Natural killer cell (primary cell): ENCODE measurements at regions of chr10 and their contacts with region 1.

Region 1: DNA sequence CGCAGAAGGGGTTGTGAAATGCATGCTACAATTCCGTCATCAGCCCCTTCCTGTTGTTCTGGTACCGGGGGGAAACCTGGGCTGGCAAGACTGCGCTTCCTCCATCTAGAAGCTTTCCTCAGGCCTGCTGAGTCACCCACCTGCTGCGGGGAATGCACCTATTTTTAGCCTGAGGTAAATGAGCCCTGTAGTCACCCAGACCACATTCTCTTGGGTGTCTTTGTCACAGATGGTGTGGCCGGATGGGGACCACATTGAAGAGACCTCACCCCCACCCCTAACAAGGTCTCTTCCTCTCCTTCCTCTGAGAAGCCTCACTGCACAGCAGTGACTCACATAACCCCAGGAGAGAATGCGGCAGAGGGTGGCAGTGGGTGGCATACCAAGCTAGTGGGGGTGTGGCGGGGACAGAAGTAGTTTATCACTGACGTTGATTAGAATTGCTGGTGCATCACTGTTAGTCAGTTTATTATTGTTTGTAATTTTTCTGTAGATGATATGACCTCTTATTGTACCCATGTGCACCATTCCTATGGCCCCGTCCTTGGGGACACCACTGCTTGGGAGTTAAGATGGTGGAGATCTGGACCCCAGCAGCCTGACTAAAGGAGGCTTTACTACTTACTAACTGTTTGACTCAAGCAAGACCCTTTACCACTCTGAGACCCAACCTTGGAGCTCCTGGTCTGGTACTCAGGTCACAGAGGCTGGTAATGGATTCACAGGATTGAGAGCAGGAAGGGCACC is 83.0 kb upstream of the DUSP5 start:
- DNase-seq: peak; percentile 86 to 95
- ATAC-seq: peak; percentile 89 to 96 (median 94)
- H3K4me3 ChIP-seq: no peak overlapping the region
- H3K4me3 Mint-ChIP-seq: peak overlapping the region; percentile 70
- H3K27ac ChIP-seq: peak overlapping the region; percentile 52
- H3K27ac Mint-ChIP-seq: peak overlapping the region; percentile 88 to 89
- H3K4me1 ChIP-seq: peaks cover 62% of the 10 kb centered on the region
- H3K4me1 Mint-ChIP-seq: peaks cover 54 to 63% of the 10 kb centered on the region in 2 donors
- H3K27me3 ChIP-seq: no peaks in the 10 kb centered on the region
- H3K27me3 Mint-ChIP-seq: peaks cover 0 to 10% of the 10 kb centered on the region in 2 donors
- CTCF ChIP-seq: no peak

Region 2: DNA sequence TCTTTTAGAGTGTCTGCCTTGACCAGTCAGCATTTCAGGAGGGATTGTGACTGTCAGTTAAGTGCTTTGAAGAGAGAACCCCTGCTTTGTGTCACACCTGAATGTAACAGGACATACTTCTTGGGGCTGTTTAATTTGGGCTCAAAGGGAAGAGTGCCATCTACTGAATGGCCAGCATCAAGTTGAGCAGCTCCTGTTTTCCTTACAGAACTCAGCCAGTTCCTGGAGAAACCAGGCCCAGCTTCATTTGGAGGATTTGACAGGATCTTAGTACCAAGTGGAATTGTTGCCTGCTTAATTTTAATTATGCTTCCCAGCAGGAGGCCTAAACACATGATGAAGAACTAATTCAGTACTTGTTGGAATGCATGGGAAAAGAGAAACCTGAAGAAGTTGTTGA is 398.7 kb before region 1 on chr10:
- intact Hi-C with region 1: loop called (anchors 10 kb)
- DNase-seq: peak in 1 of 2 donors; percentile 52
- ATAC-seq: no peak
- H3K4me3 ChIP-seq: no peak overlapping the region
- H3K4me3 Mint-ChIP-seq: peak overlapping the region; percentile 6
- H3K27ac ChIP-seq: no peak overlapping the region
- H3K27ac Mint-ChIP-seq: peak overlapping the region; percentile 84 to 86
- H3K4me1 ChIP-seq: peaks cover 26% of the 10 kb centered on the region
- H3K4me1 Mint-ChIP-seq: peaks cover 76 to 79% of the 10 kb centered on the region in 2 donors
- H3K27me3 ChIP-seq: no peaks in the 10 kb centered on the region
- H3K27me3 Mint-ChIP-seq: no peaks in the 10 kb centered on the region
- CTCF ChIP-seq: no peak

Region 3: DNA sequence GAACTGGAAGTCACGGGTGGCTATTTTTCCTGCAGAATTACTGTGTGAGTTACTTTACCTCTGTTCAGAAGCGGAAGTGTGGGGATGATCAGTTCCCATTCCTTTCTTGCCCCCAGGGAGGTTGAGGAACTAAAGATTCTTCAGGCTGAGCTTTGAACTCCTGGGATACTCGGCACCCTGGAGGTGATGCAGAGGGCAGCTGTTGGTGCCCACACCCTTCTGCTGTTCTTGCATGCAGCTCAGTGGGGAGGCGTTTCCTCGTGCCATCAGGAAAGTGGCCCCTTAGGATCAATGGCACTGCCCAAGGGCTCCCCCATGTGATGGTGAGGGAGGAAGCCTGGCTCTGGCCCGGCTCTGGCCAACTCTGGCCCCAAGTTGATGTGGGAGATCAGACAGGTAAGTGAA is 252.0 kb before region 1 on chr10:
- intact Hi-C with region 1: loop called (anchors 1 kb)
- DNase-seq: no peak
- ATAC-seq: no peak
- H3K4me3 ChIP-seq: no peak overlapping the region
- H3K4me3 Mint-ChIP-seq: no peak overlapping the region
- H3K27ac ChIP-seq: no peak overlapping the region
- H3K27ac Mint-ChIP-seq: no peak overlapping the region
- H3K4me1 ChIP-seq: peaks cover 13% of the 10 kb centered on the region
- H3K4me1 Mint-ChIP-seq: peaks cover 10 to 11% of the 10 kb centered on the region in 2 donors
- H3K27me3 ChIP-seq: peaks cover 79% of the 10 kb centered on the region
- H3K27me3 Mint-ChIP-seq: peaks cover 59 to 72% of the 10 kb centered on the region in 2 donors
- CTCF ChIP-seq: no peak

Region 4: DNA sequence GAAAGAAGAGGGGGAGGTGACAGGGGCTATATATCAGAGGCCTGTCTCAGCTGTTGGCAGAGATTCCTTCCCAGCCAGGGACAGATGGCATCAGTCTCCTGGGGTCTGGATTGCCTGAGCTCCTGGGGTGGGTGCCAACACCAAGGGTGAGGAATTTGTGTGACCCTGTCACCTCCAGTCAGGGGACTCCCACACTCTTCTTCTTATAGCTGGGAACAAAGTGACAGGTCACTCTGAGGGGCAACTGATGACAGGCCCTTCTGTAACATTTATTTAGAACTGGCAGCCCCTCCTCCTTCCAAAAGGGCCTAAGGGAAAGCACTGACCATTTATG is 29.2 kb after region 1 on chr10:
- intact Hi-C with region 1: loop called (anchors 1 kb)
- DNase-seq: peak in 1 of 2 donors; percentile 4
- ATAC-seq: no peak
- H3K4me3 ChIP-seq: no peak overlapping the region
- H3K4me3 Mint-ChIP-seq: no peak overlapping the region
- H3K27ac ChIP-seq: no peak overlapping the region
- H3K27ac Mint-ChIP-seq: peak overlapping the region in 1 of 2 donors; percentile 35
- H3K4me1 ChIP-seq: peaks cover 16% of the 10 kb centered on the region
- H3K4me1 Mint-ChIP-seq: peaks cover 36 to 43% of the 10 kb centered on the region in 2 donors
- H3K27me3 ChIP-seq: no peaks in the 10 kb centered on the region
- H3K27me3 Mint-ChIP-seq: no peaks in the 10 kb centered on the region
- CTCF ChIP-seq: no peak

Region 5: GRCh38 chr10:110460111-110460809 is 45.5 kb after region 1 on chr10:
- intact Hi-C with region 1: no loop called
- DNase-seq: peak; percentile 41 to 56
- ATAC-seq: peak; percentile 69 to 80 (median 75)
- H3K4me3 ChIP-seq: no peak overlapping the region
- H3K4me3 Mint-ChIP-seq: peak overlapping the region; percentile 81
- H3K27ac ChIP-seq: peak overlapping the region; percentile 57
- H3K27ac Mint-ChIP-seq: peak overlapping the region in 1 of 2 donors; percentile 89
- H3K4me1 ChIP-seq: peaks cover 63% of the 10 kb centered on the region
- H3K4me1 Mint-ChIP-seq: peaks cover 60 to 69% of the 10 kb centered on the region in 2 donors
- H3K27me3 ChIP-seq: no peaks in the 10 kb centered on the region
- H3K27me3 Mint-ChIP-seq: no peaks in the 10 kb centered on the region
- CTCF ChIP-seq: no peak

Region 6: DNA sequence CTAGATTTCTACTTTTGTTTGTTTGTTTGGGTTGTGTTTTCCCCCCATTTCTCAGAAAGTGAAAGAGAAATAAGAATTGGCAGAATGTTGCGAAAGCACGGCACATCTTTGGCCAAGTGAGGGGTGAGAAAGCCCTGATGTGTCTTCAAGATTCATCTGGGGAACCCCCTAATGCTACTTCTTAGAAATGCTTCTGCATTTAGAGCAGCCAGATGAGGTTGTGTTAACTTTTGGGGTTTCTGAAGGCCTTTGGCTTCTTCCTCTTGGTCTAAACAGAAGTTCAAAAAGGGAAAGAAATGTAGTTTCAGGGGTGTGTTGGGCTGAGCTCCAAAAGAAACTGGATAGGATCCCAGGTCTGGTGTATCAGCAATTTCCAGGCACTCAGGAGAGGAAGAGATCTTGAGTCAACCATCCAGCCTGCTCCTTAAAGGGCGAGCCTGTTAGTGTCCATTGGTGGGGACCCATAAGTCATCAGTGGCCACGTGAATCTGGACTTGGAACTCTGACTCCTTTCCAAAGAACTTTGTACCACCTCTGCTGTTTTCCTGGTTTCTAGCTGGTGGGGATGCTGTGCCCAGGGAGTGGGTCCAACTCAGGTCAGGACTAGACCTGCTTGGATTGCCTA is 89.5 kb after region 1 on chr10:
- intact Hi-C with region 1: loop called (anchors 1 kb)
- DNase-seq: peak; percentile 51 to 86
- ATAC-seq: peak; percentile 90 to 94 (median 93)
- H3K4me3 ChIP-seq: no peak overlapping the region
- H3K4me3 Mint-ChIP-seq: peak overlapping the region; percentile 76
- H3K27ac ChIP-seq: peak overlapping the region; percentile 95
- H3K27ac Mint-ChIP-seq: peak overlapping the region; percentile 96
- H3K4me1 ChIP-seq: peaks cover 59% of the 10 kb centered on the region
- H3K4me1 Mint-ChIP-seq: peaks cover 64 to 79% of the 10 kb centered on the region in 2 donors
- H3K27me3 ChIP-seq: no peaks in the 10 kb centered on the region
- H3K27me3 Mint-ChIP-seq: no peaks in the 10 kb centered on the region
- CTCF ChIP-seq: no peak